Activated CD4-positive, alpha-beta memory T cell treated with anti-CD3 and anti-CD28 coated beads for 36 hours (primary cell): ENCODE measurements at regions of chr15 and their contacts with region 1.

Region 1: DNA sequence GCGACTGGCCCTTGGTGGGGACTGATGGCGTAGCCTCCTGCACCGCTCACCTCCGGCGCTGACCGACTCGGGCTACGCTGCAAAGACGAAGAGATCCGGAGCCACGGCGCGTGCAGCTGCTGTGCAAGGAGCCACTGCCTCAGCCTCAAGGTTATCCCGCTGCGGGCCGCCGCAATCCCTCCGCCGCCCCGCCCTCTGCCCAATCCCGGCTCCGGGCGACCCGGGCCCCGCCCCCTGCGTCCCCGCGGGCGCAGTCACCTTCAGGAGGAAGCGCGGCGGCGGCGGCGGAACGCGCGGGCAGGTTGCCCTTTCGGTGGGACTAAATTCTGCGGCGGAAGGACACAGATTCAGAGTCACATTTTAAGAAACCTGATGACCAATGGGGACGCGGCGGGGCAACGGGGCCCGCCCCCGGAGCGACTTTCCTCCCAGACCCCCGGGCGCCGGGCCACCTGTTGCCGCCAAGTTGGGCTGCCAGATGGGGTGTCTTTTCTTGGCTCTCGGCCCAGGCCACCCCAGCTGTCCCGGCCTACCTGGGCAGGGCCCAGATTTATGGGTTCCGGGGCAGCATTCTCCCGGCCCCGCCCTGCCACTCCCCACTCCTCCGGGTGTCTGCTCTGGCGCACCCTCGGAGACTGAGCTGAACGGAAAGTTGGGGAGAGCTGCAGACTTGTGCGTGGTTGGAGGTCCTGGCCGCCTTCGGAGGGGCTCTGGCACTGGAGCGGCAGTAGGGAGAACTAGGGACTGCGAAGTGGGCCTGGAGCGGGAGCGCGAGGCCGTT is at the start of gene PKM:
- DNase-seq: peak; percentile 97
- H3K4me3 Mint-ChIP-seq: peak within 1 kb of the TSS; percentile 94
- H3K27ac Mint-ChIP-seq: peak within 1 kb of the TSS; percentile 98
- H3K4me1 Mint-ChIP-seq: peaks cover 27% of the 10 kb centered on the region
- H3K27me3 Mint-ChIP-seq: no peaks in the 10 kb centered on the region
- total RNA-seq, gene PKM: 2,032 to 2,053 TPM

Region 2: DNA sequence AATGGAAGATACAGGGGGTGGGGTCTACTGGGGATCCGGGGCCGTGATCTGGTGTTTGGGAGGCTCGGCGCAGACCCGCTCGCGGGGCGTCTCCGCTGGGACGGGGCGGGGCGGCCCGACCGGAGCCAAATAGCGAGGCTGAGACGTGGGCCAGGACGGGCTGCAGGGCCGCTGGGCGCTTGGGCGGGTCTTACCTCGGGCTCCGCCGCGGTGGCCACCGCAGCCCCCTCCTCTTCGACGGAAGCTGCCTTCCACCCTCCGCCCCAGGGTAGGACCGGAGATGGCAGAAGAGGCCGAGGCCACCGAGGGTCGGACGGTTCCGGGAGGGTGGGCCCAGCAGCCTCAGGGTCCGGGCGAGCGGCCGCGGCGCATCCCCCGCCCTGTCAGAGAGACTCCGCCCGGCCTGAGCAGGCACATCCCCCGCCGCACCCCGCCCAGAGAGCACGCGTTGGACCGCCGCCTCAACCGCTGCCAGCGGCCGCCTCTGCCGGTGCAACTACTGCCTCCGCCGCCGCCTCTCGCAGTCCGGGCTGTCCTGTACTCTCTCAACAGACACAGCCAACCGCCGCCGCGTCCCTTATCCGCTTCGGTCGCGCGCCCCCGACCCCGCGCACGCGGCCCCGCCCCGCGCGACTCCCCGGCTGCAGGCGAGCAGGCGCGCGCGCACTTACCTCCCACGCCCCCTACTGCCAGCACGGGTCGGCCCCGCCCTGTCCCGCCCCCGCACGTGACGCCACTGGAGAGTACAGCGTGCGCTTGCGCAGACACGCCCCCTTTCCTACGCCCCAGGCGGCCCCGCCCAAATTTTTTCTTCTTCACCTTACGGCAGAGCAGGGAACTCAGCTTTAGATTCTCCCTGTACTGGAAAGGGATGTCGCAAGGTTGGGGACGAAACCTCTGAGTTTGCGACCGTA is 113.5 kb before region 1 on chr15 and contains the start of gene MYO9A:
- CTCF ChIA-PET with region 1: no interaction called
- POLR2A ChIA-PET with region 1: interaction called, 7 read pairs
- intact Hi-C with region 1: loop called (anchors 1 kb)
- DNase-seq: peak; percentile 100
- H3K4me3 Mint-ChIP-seq: peak within 1 kb of the TSS; percentile 98
- H3K27ac Mint-ChIP-seq: peak within 1 kb of the TSS; percentile 98
- H3K4me1 Mint-ChIP-seq: peaks cover 34% of the 10 kb centered on the region
- H3K27me3 Mint-ChIP-seq: no peaks in the 10 kb centered on the region
- total RNA-seq, gene MYO9A: 18.3 to 20.2 TPM

Region 3: GRCh38 chr15:72176159-72176558 is 55.1 kb before region 1 on chr15:
- CTCF ChIA-PET with region 1: no interaction called
- POLR2A ChIA-PET with region 1: no interaction called
- intact Hi-C with region 1: no loop called
- DNase-seq: no peak
- H3K4me3 Mint-ChIP-seq: no peak overlapping the region
- H3K27ac Mint-ChIP-seq: no peak overlapping the region
- H3K4me1 Mint-ChIP-seq: no peaks in the 10 kb centered on the region
- H3K27me3 Mint-ChIP-seq: no peaks in the 10 kb centered on the region

Region 4: DNA sequence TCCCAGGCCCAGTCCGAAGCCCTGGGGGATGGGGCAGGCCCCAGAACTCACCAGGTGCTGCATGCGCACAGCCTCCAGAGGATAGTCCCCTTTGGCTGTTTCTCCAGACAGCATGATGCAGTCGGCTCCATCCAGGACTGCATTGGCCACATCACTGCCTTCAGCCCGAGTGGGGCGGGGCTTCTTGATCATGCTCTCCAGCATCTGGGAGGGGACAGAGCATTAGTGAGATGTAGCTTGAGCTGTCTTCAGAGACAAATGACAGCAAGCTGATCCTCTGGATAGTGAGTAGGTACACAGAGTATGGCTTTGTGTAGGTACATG is 24.6 kb before region 1 on chr15:
- CTCF ChIA-PET with region 1: interaction called, 65 read pairs
- POLR2A ChIA-PET with region 1: interaction called, 17 read pairs
- intact Hi-C with region 1: loop called (anchors 1 kb)
- DNase-seq: no peak
- H3K4me3 Mint-ChIP-seq: no peak overlapping the region
- H3K27ac Mint-ChIP-seq: peak overlapping the region; percentile 79
- H3K4me1 Mint-ChIP-seq: peaks cover 40% of the 10 kb centered on the region
- H3K27me3 Mint-ChIP-seq: no peaks in the 10 kb centered on the region

Region 5: GRCh38 chr15:72265031-72265430 is 33.8 kb after region 1 on chr15:
- CTCF ChIA-PET with region 1: interaction called, 10 read pairs
- POLR2A ChIA-PET with region 1: interaction called, 37 read pairs
- intact Hi-C with region 1: loop called (anchors 1 kb)
- DNase-seq: no peak
- H3K4me3 Mint-ChIP-seq: no peak overlapping the region
- H3K27ac Mint-ChIP-seq: no peak overlapping the region
- H3K4me1 Mint-ChIP-seq: peaks cover 33% of the 10 kb centered on the region
- H3K27me3 Mint-ChIP-seq: no peaks in the 10 kb centered on the region

Region 6: DNA sequence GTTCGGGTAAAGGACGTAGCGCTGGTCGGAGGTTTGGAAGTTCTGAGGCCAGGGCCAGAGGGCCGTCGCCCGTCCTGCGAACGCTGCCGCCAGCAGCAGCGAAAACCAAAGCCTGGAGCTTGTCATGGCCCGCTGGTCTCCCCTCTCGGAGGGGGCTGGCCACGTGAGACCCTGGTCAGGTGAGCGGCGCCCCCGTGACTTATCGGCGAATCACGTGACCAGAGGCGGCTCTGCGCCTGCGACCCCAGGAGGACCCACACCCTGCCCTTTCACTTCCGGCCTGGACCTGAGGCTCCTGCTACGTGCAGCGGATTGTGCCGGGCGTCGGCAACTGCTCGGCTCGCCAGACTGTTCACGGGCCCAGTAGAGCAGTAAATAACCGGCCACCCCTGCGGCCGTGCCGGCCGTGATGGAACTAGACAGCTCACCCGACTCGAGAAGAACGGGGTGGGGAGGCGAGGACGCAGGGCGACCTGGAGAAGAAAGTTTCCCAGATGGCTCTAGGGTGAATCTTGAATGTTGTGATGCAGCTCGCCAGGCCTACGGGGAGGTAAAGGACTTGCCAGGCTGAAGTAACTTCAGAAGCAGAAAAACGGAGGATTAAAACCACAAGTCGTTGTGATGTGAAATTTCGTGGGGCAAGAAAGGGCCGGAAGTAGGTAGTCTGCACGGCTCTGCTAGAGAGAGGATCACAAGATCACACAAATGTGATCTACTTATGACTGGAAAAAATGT is 144.8 kb after region 1 on chr15 and contains the start of gene HEXA:
- CTCF ChIA-PET with region 1: interaction called, 4 read pairs
- POLR2A ChIA-PET with region 1: interaction called, 11 read pairs
- intact Hi-C with region 1: loop called (anchors 5 kb)
- DNase-seq: peak; percentile 98
- H3K4me3 Mint-ChIP-seq: peak within 1 kb of the TSS; percentile 91
- H3K27ac Mint-ChIP-seq: peak within 1 kb of the TSS; percentile 92
- H3K4me1 Mint-ChIP-seq: peaks cover 32% of the 10 kb centered on the region
- H3K27me3 Mint-ChIP-seq: peaks cover 1% of the 10 kb centered on the region
- total RNA-seq, gene HEXA: 57.5 to 59.8 TPM

Region 7: DNA sequence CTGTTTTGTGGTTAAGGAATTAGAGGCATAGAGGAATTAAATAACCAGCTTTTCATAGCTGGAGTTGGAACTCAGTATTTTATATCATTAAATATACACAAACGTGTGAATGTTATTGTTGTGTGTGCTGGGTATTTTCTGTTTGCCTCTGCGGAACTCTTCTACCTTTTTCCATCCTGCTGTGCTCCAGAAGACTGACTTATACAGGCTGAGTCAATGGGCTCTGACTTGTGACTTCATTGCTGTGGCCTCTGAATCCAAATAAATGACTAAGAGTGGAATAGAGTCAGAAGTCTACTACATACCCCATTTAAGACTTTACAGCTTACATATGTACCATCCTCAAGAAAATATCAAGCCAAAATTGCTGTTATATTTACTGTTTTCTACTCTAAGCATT is 260.5 kb after region 1 on chr15:
- CTCF ChIA-PET with region 1: no interaction called
- POLR2A ChIA-PET with region 1: no interaction called
- intact Hi-C with region 1: no loop called
- DNase-seq: no peak
- H3K4me3 Mint-ChIP-seq: no peak overlapping the region
- H3K27ac Mint-ChIP-seq: no peak overlapping the region
- H3K4me1 Mint-ChIP-seq: peaks cover 60% of the 10 kb centered on the region
- H3K27me3 Mint-ChIP-seq: no peaks in the 10 kb centered on the region